ENCODE measurements at regions of chr6 and their contacts with region 1.

Region 1: DNA sequence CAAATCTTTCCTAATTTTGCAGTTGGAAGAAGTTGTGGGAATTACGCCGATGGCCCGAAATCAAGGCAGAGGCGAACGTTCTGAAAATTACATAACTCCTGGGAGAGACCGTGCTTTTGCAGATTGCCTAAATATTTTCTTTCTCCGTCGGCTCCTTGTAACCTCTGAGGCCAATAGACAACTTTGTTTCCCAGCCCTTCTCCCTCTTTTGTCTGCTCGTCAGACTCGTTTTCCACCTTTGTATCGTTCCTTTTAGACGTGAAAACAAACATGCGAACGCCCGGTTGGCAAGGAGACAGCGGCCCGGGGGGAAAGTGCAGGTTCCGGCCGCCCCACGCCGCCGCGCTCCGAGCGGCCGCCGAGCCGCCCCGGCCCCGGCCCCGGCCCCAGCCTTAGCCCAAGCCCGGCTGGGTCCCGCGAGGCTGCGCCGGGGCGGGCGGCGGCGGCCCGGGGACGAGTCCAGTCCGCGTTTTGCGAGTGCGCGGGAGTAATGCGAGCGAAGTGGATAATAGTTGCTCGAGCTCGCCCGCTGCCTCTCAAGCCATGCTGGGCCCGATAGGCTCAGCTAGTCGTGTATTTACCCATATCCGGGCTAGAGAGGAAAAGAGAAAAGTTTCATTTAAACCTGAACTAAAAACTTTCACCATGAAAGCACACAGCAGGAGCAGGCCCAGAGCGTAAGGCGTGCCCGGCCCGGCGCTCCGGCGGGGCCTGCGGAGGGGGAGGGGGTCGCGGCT is at the start of gene ARID1B:
- DNase-seq: peak; percentile 91
- ATAC-seq: peak; percentile 74
- total RNA-seq, gene ARID1B: 49.2 TPM

Region 2: DNA sequence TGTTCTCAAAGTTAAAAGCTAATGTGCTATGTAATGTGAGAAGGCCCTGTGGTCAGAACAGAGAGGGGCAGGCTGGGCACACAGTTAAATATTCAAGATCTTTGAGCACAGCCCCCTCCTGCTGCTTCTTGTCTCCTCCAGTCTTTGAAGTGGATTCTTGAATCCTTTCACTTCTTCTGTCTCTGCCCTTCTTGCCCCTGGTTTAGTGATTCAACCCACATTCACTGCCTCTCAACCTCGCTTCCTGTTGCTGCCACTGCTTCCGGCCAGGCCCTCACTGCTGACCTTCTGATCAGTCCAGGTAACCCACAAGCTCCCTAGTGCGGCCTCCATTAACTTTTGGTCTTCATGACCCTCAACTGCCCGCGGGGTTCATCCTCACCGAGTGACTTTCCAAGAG is 904.0 kb before region 1 on chr6:
- intact Hi-C with region 1: no loop called
- DNase-seq: no peak
- ATAC-seq: no peak

Region 3: DNA sequence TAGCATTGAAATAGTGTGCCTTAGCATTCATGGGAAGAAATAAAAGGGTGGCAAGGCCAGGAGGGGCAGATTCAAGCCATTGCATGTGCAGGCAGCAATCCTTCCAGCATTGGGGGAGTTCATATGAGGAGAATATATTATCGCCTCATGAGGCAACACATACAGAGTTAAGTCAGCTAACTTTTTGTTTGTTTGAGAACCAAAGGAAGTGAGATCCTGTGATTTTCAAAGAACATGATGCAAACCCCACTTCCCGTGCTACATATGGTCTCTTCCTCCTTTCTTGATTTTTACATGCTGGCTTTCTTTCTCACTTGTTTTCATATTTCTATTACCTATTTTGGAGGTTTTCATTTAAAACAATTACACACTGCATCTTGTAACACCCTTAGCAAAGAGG is 579.5 kb before region 1 on chr6:
- intact Hi-C with region 1: no loop called
- DNase-seq: no peak
- ATAC-seq: no peak

Region 4: GRCh38 chr6:156564127-156564806 is 212.7 kb before region 1 on chr6:
- intact Hi-C with region 1: loop called (anchors 5 kb)
- DNase-seq: peak; percentile 87
- ATAC-seq: peak; percentile 97

Region 5: DNA sequence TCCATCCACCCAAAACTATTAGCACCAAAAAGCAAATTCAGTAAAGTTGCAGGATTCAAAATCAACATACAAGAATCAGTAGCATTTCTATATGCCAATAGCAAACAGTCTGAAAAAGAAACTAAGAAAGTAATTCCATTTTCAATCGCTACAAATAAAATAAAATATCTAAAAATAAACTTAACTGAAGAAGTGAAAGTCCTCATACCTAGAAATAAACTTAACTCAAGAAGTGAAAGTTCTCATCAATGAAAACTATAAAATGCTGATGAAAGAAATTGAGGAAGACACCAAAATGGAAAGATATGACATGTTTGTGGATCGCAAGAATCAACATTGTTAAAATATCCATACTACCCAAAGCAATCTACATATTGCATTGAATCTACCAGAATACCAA is 102.8 kb before region 1 on chr6:
- intact Hi-C with region 1: no loop called
- DNase-seq: no peak
- ATAC-seq: no peak

Region 6: GRCh38 chr6:156686995-156687788 is 89.8 kb before region 1 on chr6:
- intact Hi-C with region 1: loop called (anchors 2 kb)
- DNase-seq: peak; percentile 94
- ATAC-seq: peak; percentile 95

Region 7: GRCh38 chr6:156953479-156954146 is 176.6 kb after region 1 on chr6:
- intact Hi-C with region 1: loop called (anchors 10 kb)
- DNase-seq: no peak
- ATAC-seq: peak; percentile 72

Region 8: DNA sequence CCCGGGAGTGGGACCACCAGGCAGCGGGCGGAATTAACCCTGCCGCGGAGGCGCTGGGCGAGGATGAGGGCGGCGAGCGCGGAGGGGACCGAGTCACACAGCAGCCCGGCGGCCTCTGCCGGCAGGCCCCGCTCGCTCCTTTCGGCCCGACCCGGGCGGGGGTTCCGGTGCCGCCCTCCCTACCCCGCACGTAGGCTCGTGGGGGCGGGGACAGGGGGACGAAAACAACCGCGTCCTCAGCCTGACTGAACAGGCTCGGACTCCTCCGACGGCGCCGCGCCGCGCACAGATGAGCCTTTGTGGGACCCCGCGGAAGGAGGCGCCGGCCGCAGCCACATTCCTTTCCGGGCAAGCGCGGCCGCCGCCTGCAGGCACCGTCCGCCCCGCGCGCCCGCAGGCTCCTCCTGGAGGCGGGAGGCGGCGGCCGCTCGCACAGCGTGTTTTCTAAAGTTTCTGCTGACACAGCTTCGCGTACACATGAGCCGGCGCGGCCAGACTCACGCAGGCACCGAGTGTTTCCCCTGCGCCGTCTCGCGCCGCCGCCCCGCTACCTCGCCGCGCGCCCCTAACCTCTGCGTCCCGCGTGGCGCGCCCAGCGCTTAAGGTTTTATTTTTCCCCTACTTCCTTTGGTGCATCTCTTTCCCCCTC is 244.5 kb after region 1 on chr6:
- intact Hi-C with region 1: loop called (anchors 2 kb)
- DNase-seq: peak; percentile 95
- ATAC-seq: peak; percentile 94

Region 9: DNA sequence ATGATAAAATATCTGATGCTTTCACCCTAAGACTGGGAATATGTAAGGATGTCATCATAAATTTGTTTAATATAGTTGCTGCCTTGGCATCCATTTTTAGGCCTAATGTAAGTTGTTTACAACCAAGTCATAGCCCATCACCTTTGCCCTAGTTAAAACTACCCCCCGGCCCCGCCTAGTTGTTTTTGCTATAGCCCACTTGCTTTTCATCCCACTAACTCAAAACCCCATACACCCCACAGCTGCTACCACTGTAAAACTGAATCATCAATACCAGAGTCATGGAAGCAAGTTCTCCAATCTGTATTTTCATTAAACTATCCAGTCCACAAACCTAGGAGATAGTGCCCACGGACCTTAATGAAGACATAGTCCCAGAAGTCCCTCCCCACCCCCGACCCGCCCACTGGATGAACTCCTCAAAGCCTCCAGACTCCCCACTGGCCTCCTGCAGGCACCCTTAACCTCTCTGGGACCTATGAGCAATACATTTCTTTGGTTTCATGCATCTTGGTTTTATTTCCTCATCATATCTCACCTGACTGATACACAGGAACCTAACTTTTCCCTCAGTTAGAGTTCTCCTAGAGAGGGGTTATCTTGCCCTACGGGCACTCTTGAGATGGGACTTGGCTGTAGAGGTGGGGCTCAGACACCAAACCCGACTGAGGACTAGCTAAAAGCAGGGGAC is 591.5 kb after region 1 on chr6:
- intact Hi-C with region 1: no loop called
- DNase-seq: no peak
- ATAC-seq: no peak